ENCODE measurements at regions of chr6 and their contacts with region 1.

Region 1: DNA sequence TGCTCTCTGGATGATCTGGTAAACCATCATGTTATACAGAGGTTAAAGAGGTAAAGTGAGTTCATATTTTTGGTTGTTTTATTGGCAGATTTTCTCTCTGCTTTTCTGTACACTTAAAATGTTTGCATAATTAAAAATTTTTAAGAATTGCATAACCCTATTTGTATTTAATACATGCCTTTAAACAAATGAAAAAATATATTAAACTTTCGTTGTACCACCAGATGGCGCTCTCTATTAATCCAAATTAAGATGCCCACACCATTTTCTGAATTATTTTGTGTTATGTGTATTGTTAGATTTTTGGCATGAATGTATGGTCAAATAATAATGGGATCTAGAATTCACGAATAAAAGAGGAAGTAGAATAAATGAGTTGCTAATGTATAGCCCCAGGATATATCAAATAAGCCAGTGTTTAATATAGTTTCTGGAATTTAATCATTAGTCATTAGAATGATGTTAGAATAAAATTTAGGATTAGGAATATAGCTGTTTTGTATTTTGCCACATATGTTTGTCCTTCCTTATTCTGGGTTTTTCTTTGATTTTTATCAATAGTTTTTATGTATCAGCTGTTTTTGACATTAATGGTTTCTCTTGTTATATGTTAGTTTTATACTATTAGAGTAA is 38.9 kb downstream of the SMAP1 start:
- DNase-seq: no peak
- H3K4me3 ChIP-seq: no peak overlapping the region
- H3K27ac ChIP-seq: no peak overlapping the region
- H3K4me1 ChIP-seq: no peaks in the 10 kb centered on the region
- H3K27me3 ChIP-seq: no peaks in the 10 kb centered on the region
- CTCF ChIP-seq: peak; percentile 30 to 82 (median 37)
- POLR2A ChIP-seq: no peak

Region 2: DNA sequence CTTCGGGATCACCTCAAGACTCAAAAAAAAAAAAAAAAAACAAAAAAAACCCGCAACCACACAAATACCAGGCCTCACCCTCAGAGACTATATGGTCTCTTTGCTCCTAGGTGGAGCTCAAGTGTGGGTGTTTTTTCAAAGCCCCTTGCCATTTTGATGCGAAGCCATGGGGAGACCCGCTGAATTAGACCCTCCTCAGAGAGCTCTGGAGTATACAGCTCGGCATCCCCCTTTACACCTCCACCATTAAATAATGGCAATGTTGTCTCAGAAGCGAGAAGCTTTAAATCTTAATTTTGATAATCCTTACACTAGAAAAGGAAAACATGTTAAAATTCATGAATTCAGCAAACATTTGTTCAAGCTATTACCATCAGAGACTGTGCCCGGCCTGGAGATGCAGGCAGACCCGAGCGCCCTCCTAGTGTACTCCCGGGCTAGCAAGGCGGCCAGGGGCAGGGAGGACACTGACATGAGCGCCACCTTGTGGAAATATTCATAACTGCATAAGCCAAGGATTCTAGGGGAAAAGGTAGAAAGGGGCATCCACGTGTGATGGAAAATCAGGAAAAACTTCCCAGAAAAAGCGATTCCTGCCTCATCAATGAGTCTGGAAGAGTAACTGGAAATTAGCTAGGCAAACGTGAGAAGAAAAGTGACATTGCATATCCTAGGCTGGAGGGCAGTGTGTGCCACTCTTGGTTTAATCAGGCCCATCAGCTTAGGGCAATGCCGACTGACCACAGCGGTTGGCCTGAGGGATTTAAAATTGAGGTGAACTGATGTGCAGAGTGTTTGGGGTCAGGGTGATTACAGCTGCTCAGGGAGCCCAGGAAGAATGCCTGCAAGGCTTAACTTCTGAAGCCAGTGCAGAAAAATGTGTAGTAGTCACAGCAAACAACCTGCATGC is 177.7 kb after region 1 on chr6:
- intact Hi-C with region 1: loop called (anchors 10 kb)
- DNase-seq: peak; percentile 76
- H3K4me3 ChIP-seq: no peak overlapping the region
- H3K27ac ChIP-seq: no peak overlapping the region
- H3K4me1 ChIP-seq: no peaks in the 10 kb centered on the region
- H3K27me3 ChIP-seq: no peaks in the 10 kb centered on the region
- CTCF ChIP-seq: peak; percentile 84 to 92 (median 87)
- POLR2A ChIP-seq: no peak

Measured in testis (tissue), 5 donors.